ENCODE measurements at regions of chr16 and their contacts with region 1.

Region 1: GRCh38 chr16:67806428-67807147 is at the starts of genes RANBP10 and TSNAXIP1:
- H3K4me3 Mint-ChIP-seq: peak within 1 kb of the TSS; percentile 94
- H3K27ac Mint-ChIP-seq: peak within 1 kb of the TSS; percentile 88
- H3K4me1 Mint-ChIP-seq: peaks cover 30% of the 10 kb centered on the region
- H3K27me3 Mint-ChIP-seq: peaks cover 2% of the 10 kb centered on the region

Region 2: DNA sequence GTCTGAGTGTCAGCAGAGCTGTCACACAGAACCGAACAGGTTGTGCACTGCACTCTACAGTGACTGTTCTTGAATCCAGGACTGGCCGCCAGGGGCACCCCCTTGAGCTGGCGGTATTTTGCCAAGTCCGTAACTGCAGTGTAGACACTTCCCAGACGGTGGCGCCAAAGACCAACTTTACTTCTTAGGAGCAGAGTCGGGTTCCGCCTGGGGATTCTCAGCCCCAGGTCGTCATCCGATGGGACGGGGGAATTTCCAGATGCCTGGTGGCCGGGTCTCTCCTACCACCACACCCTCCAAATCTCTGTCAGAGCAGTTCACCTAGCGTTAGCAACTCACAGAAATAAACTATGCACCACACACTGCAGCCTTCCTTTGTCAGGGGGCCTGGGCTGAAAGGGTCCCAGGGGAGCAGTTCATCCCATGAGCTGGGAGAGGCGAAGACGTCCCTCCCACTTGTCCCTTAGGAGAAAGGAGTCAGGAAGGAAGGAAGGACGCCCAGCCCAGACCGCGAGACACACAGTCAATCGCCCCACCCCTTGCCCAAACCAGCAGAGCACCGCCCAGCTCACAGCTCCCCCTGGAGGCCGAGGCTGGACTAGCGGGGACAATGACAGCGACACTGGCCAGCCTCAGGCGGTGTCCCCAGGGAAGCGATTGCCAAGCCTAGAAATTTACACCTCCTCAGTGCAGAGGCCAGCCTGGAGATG is 285.3 kb before region 1 on chr16:
- intact Hi-C with region 1: loop called (anchors 1 kb)
- H3K4me3 Mint-ChIP-seq: peak overlapping the region; percentile 84
- H3K27ac Mint-ChIP-seq: peak overlapping the region; percentile 99
- H3K4me1 Mint-ChIP-seq: peaks cover 68% of the 10 kb centered on the region
- H3K27me3 Mint-ChIP-seq: peaks cover 27% of the 10 kb centered on the region

Region 3: GRCh38 chr16:67672739-67673662 is 133.6 kb before region 1 on chr16:
- intact Hi-C with region 1: loop called (anchors 2 kb)
- H3K4me3 Mint-ChIP-seq: no peak overlapping the region
- H3K27ac Mint-ChIP-seq: peak overlapping the region; percentile 88
- H3K4me1 Mint-ChIP-seq: peaks cover 54% of the 10 kb centered on the region
- H3K27me3 Mint-ChIP-seq: no peaks in the 10 kb centered on the region

Region 4: DNA sequence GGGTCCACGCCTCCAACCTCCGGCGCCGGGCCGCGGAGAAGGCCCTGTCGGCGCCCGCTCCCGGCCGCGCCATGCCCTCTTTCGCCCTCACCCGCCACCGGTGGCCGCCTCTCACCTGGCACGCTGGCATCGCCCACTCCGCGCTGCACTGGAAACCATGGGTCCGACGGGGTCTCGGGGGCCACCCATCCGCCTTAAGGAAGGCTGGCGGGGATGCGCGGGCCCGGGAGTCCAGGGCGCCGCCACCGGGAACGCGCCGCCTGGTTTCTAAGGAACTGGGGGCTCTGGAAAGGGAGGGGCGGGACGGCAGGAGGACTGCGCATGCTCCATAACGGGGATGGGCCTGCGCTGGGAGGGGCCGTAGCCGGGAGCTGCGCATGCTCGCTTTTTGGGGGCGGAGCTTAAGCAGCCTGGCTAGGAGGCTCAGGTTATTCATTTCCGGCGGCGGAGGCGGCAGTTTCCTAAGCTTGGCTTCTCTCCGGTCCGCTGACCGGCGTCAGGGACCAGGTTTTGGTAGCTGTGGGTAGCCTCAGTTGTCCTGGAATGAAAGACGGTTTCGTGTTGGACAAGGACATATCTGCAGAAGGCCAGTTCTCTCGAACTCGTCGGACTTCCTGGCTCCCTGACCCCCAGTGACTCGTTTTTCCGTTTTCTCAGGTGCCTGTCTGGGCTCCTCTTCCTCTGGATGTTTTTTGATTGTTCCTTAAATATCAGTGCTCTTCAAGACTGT is 87.4 kb before region 1 on chr16 and contains the start of gene GFOD2:
- intact Hi-C with region 1: loop called (anchors 1 kb)
- H3K4me3 Mint-ChIP-seq: peak within 1 kb of the TSS; percentile 98
- H3K27ac Mint-ChIP-seq: peak within 1 kb of the TSS; percentile 96
- H3K4me1 Mint-ChIP-seq: peaks cover 37% of the 10 kb centered on the region
- H3K27me3 Mint-ChIP-seq: no peaks in the 10 kb centered on the region

Region 5: DNA sequence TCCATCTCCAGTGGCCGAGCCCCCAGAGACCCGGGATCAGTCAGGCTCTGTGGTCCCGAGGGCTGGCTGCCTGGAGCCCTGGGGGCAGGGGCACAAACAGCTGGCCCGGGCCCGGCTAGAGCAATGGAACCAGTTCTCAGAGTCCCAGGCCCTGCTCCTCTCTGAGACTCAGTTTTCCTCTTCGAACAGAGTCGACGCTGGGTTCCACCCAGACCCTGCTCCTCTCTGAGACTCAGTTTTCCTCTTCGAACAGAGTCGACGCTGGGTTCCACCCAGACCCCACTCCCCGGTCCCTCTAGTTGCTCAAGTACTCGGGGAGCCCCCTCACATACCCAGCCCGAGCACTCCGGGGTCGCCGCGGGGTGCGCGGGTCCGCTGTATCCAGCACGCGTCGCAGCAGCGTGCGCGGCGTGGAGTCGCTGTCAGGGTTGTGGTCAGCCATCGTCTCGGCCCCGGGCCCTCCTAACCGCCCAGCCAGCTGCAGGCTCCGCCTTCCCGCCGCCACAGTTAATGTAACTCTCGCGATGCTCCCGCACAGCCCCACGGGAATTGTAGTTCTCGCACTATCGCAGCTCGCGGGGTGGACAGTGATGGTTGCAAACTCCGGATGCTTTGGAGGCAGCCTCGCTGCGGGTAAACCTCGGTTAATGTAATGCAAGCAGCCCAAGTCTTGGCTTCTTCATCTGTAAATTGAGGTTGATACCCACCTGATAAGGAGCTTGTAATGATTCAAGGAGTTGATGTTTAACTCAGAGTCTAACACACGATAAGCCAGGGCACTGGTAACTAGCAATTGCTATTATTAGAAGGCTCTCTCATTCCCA is 27.0 kb after region 1 on chr16:
- intact Hi-C with region 1: loop called (anchors 1 kb)
- H3K4me3 Mint-ChIP-seq: peak overlapping the region; percentile 98
- H3K27ac Mint-ChIP-seq: peak overlapping the region; percentile 92
- H3K4me1 Mint-ChIP-seq: peaks cover 17% of the 10 kb centered on the region
- H3K27me3 Mint-ChIP-seq: no peaks in the 10 kb centered on the region

Region 6: DNA sequence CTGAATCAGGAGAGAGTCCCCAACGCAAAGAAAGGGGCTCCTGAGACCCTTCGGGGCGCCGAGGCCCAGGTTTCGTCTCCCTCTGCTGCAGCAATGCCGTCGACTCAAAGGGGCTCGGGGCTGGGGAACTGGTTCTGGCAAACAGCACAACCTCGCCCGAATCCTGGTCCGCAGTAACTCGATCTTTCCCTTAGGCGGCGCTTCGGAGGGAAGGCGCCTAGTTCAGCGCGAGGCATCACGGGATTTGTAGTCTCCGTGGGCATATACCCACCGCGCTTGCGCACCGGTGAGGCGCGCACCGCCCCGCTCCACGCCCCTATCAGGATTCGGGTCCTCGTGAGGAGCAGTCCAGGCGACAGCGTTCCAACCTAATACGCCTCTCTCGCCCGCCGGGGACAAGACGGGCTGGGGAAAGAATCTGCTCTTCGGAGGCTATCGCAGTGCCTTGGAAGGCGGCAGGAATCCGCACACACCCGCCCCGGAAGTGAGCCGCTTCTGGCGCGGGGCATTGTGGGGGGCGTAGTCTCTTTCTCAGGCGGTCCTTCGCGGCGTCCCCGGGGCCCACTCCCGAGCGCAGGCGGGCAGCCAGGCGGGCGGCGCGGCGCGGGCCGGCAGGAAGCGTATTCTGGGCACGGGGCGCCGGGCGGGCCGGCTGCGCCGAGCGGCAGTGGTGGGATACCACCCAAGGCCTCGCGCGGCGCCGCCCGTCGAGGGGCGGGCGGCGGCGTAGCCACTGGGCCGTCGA is 35.3 kb after region 1 on chr16 and contains the start of gene THAP11:
- intact Hi-C with region 1: loop called (anchors 1 kb)
- H3K4me3 Mint-ChIP-seq: peak within 1 kb of the TSS; percentile 97
- H3K27ac Mint-ChIP-seq: peak within 1 kb of the TSS; percentile 97
- H3K4me1 Mint-ChIP-seq: peaks cover 36% of the 10 kb centered on the region
- H3K27me3 Mint-ChIP-seq: no peaks in the 10 kb centered on the region

Region 7: DNA sequence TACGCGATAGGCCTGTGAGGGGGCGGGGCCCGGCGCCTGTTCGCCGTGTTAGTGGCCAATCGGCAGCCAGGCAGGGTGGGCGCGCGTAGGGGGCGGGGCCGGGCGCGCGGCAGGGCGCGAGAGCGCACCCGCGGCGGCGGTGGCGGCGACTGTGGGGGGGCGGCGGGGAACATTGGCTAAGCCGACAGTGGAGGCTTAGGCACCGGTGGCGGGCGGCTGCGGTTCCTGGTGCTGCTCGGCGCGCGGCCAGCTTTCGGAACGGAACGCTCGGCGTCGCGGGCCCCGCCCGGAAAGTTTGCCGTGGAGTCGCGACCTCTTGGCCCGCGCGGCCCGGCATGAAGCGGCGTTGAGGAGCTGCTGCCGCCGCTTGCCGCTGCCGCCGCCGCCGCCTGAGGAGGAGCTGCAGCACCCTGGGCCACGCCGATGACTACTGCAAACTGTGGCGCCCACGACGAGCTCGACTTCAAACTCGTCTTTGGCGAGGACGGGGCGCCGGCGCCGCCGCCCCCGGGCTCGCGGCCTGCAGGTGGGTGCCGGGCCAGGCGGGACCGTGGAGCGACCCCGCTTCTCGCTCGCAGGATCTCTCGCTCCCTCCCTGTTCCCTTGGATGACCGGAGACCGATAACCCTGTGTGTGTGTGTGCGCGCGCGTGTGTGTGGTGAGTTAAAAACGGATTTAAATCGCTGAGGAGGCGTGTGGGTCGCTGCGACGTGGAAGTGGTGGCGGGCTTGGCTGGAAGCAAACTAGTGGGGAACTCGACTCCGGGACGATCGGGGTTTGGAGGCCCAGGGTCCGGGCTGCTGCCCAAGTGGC is 278.9 kb after region 1 on chr16 and contains the start of gene NFATC3:
- intact Hi-C with region 1: loop called (anchors 5 kb)
- H3K4me3 Mint-ChIP-seq: peak within 1 kb of the TSS; percentile 90
- H3K27ac Mint-ChIP-seq: peak within 1 kb of the TSS; percentile 96
- H3K4me1 Mint-ChIP-seq: peaks cover 61% of the 10 kb centered on the region
- H3K27me3 Mint-ChIP-seq: no peaks in the 10 kb centered on the region

Measured in dendritic cell treated with granulocyte-macrophage colony-stimulating factor and Interleukin-4, amounts not matched to agents 40 ng/mL and 50 ng/mL, for 4 days (primary cell).